GM18951 (cell line): ENCODE measurements at regions of chr17 and their contacts with region 1.

Region 1: GRCh38 chr17:63919311-63919723 is 678 bp upstream of the GH1 start:
- POLR2A ChIP-seq: no peak

Region 2: DNA sequence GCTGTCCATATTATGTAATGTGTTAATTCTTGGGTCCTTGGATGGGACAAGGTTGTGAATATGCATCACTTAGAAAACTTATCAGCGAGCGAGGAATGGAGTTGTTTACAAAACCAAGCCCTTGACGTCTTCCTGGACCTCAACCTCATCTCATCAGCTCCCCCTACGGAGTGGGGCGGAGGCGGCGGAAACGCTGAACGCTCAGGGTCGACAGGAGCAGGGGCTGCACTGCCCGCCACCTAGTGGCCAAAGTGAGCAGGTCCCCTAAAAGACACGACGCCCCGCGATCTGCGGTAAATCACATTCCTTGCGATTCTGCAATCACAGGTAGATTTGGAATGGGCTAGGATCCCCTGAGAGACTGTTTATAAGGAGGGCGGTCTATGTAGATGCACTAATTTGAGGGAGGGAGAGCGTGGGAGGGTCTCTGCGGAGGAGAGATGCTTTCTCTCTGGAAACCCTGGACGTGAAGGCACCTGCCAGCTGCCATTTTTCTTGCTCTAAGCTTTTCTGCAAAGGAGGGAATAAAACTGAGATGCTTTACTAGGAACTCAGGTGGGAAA is 106.5 kb after region 1 on chr17:
- in situ Hi-C with region 1: loop called (anchors 10 kb)
- POLR2A ChIP-seq: no peak

Region 3: GRCh38 chr17:64129764-64130558 is 210.6 kb after region 1 on chr17 and contains the start of gene ERN1:
- in situ Hi-C with region 1: loop called (anchors 10 kb)
- POLR2A ChIP-seq: peak; percentile 100

Region 4: DNA sequence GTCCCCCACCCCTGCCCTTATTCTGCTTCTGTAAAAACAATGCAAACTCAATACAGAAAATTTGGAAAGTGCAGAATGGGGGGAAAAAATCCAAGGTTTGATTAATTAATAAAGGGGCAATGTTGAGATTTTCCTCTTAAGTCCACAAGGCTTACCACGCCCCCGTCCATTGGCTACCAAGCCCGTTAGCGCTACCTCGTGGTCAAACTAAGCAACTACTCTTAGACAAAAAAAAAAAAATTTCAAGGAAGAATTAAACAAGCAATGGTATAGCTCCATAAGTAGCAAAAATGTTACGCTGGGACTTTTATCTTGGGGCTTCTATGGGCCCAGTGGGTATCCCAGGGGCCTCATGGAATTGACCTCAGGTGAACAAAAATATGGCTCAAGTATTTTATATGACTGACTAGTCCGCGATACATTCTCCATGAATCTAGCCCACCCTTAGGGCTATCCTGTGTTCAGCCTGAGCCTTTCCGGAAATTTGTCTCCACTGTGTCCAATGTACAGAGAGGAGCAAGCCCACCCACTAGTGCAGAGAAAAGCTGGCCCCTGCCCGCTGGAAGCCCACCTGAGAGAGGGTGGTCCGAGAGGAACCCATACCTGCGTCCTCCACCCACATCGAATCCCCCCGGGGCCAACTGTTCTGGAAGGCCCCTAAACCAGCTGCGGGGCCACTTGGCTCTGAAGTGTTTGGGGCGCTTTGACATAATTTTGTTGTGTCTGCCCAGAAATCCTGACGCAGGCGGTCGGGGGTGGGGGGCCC is 362.8 kb after region 1 on chr17:
- in situ Hi-C with region 1: loop called (anchors 25 kb)
- POLR2A ChIP-seq: no peak

Region 5: DNA sequence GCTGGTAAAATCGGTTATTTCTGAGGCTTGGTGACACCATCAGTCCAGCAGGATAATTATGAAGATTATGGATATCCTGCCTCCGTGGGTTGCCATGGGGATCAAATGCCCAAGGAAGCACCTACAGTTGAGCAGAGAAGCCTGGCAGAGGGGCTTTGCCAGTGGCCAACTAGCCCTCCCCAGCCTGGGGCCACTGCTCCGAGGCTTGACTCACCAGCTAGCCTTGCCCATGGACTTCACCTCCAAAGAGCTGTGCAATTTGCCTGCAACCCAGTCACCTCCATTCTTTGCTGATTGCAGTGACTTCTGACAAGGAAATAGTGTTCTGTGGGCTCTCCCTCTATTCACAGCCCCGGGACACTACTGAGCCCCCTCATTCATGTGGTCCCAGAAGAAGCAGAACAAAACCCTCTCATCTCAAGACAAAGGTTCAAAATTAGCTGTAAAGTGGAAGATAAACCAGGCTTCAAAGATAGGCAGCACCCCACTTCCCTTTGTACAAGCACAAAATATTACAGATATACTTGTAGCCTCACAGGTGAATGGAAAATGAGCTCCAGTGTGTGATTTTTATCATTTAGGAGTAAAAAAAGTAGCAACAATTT is 469.7 kb after region 1 on chr17:
- in situ Hi-C with region 1: no loop called
- POLR2A ChIP-seq: no peak